ENCODE measurements at regions of chr11 and their contacts with region 1.

Region 1: DNA sequence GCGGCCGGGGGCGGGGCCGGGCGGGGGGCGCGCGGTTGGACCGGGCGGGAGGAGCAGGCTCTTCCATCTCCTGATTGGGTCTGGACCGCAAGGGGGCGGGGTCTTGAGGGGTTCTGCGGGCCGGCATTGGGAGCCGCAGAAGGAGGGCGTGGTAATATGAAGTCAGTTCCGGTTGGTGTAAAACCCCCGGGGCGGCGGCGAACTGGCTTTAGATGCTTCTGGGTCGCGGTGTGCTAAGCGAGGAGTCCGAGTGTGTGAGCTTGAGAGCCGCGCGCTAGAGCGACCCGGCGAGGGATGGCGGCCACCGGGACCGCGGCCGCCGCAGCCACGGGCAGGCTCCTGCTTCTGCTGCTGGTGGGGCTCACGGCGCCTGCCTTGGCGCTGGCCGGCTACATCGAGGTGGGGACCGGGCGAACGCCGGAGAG is at the start of gene APLP2:
- DNase-seq: peak; percentile 97
- H3K4me3 Mint-ChIP-seq: peak within 1 kb of the TSS; percentile 92
- H3K27ac Mint-ChIP-seq: peak within 1 kb of the TSS; percentile 85
- H3K4me1 Mint-ChIP-seq: peaks cover 26% of the 10 kb centered on the region
- H3K27me3 Mint-ChIP-seq: no peaks in the 10 kb centered on the region
- CTCF ChIP-seq: no peak
- total RNA-seq, gene APLP2: 446 and 447 TPM in 2 replicates

Region 2: GRCh38 chr11:129530154-129530895 is 539.4 kb before region 1 on chr11:
- CTCF ChIA-PET with region 1: no interaction called
- intact Hi-C with region 1: no loop called
- DNase-seq: peak; percentile 64
- H3K4me3 Mint-ChIP-seq: no peak overlapping the region
- H3K27ac Mint-ChIP-seq: no peak overlapping the region
- H3K4me1 Mint-ChIP-seq: peaks cover 20% of the 10 kb centered on the region
- H3K27me3 Mint-ChIP-seq: no peaks in the 10 kb centered on the region
- CTCF ChIP-seq: no peak

Region 3: GRCh38 chr11:130124096-130124495 is 54.4 kb after region 1 on chr11:
- CTCF ChIA-PET with region 1: interaction called, 5 read pairs
- intact Hi-C with region 1: loop called (anchors 5 kb)
- DNase-seq: peak; percentile 72
- H3K4me3 Mint-ChIP-seq: peak overlapping the region; percentile 34
- H3K27ac Mint-ChIP-seq: peak overlapping the region; percentile 76
- H3K4me1 Mint-ChIP-seq: peaks cover 43% of the 10 kb centered on the region
- H3K27me3 Mint-ChIP-seq: no peaks in the 10 kb centered on the region
- CTCF ChIP-seq: no peak

Region 4: GRCh38 chr11:130189492-130190210 is 120.0 kb after region 1 on chr11:
- CTCF ChIA-PET with region 1: no interaction called
- intact Hi-C with region 1: no loop called
- DNase-seq: no peak
- H3K4me3 Mint-ChIP-seq: no peak overlapping the region
- H3K27ac Mint-ChIP-seq: peak overlapping the region; percentile 27
- H3K4me1 Mint-ChIP-seq: no peaks in the 10 kb centered on the region
- H3K27me3 Mint-ChIP-seq: no peaks in the 10 kb centered on the region
- CTCF ChIP-seq: no peak

Measured in Calu3 (cell line).